Esophagus muscularis mucosa (tissue), 4 donors: ENCODE measurements at regions of chr17 and their contacts with region 1.

Region 1: GRCh38 chr17:44636562-44636961 is 19.7 kb upstream of the MEIOC start:
- DNase-seq: no peak
- H3K4me3 ChIP-seq: no peak overlapping the region
- H3K27ac ChIP-seq: no peak overlapping the region
- H3K4me1 ChIP-seq: no peaks in the 10 kb centered on the region
- H3K27me3 ChIP-seq: peaks cover 0 to 5% (median 0%) of the 10 kb centered on the region in 4 donors
- CTCF ChIP-seq: peak; percentile 31 to 51 (median 46)
- EP300 ChIP-seq: no peak
- POLR2A ChIP-seq: no peak

Region 2: GRCh38 chr17:44533533-44534246 is 102.9 kb before region 1 on chr17:
- intact Hi-C with region 1: loop called (anchors 1 kb)
- DNase-seq: peak; percentile 96
- H3K4me3 ChIP-seq: peak overlapping the region; percentile 10 to 44 (median 27)
- H3K27ac ChIP-seq: peak overlapping the region; percentile 10 to 43 (median 35)
- H3K4me1 ChIP-seq: peaks cover 0 to 11% (median 10%) of the 10 kb centered on the region in 4 donors
- H3K27me3 ChIP-seq: no peaks in the 10 kb centered on the region
- CTCF ChIP-seq: peak; percentile 94 to 98 (median 96)
- EP300 ChIP-seq: no peak
- POLR2A ChIP-seq: no peak

Region 3: GRCh38 chr17:44565866-44566443 is 70.6 kb before region 1 on chr17:
- intact Hi-C with region 1: no loop called
- DNase-seq: no peak
- H3K4me3 ChIP-seq: no peak overlapping the region
- H3K27ac ChIP-seq: no peak overlapping the region
- H3K4me1 ChIP-seq: no peaks in the 10 kb centered on the region
- H3K27me3 ChIP-seq: peaks cover 0 to 43% (median 0%) of the 10 kb centered on the region in 4 donors
- CTCF ChIP-seq: peak in 1 of 3 experiments; percentile 4
- EP300 ChIP-seq: no peak
- POLR2A ChIP-seq: no peak

Region 4: GRCh38 chr17:44689477-44690217 is 53.1 kb after region 1 on chr17 and contains the start of gene CCDC43:
- intact Hi-C with region 1: loop called (anchors 10 kb)
- DNase-seq: peak; percentile 94
- H3K4me3 ChIP-seq: peak within 1 kb of the TSS; percentile 74 to 91 (median 78)
- H3K27ac ChIP-seq: peak within 1 kb of the TSS; percentile 80 to 88 (median 87)
- H3K4me1 ChIP-seq: peaks cover 16 to 40% (median 27%) of the 10 kb centered on the region in 4 donors
- H3K27me3 ChIP-seq: no peaks in the 10 kb centered on the region
- CTCF ChIP-seq: peak in 1 of 3 experiments; percentile 21
- EP300 ChIP-seq: no peak
- POLR2A ChIP-seq: no peak
- total RNA-seq, gene CCDC43: 15.2 to 20.2 (median 15.9) TPM

Region 5: GRCh38 chr17:45170936-45171337 is 534.4 kb after region 1 on chr17:
- intact Hi-C with region 1: no loop called
- DNase-seq: peak; percentile 94
- H3K4me3 ChIP-seq: peak overlapping the region; percentile 48 to 63 (median 52)
- H3K27ac ChIP-seq: peak overlapping the region; percentile 88 to 97 (median 90)
- H3K4me1 ChIP-seq: peaks cover 25 to 49% (median 44%) of the 10 kb centered on the region in 4 donors
- H3K27me3 ChIP-seq: no peaks in the 10 kb centered on the region
- CTCF ChIP-seq: no peak
- EP300 ChIP-seq: no peak
- POLR2A ChIP-seq: no peak